Dorsolateral prefrontal cortex (tissue), 120 donors: ENCODE measurements at regions of chr14 and their contacts with region 1.

Region 1: DNA sequence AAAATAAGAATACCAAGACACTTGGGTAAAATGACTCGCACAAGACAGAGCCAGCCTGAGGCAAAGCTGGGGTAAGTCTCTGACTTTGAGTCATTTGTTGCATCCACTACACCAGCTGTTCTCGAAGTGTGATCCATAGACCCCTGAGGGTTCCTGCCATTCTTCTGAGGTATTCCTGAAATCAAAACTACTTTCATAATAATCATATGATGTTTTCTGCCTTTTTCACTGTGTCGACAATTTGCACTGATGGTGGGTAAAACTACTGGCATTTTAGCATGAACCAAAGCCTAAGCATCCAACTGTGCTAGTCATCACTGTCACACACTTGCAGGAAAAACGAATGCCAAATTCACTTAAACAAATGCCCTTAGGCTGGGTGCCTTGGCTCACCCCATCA is 135.5 kb upstream of the FUT8 start:
- DNase-seq: no peak
- H3K4me3 ChIP-seq: no peak overlapping the region
- H3K27ac ChIP-seq: peak overlapping the region; percentile 69 to 100 (median 96)
- H3K27me3 ChIP-seq: no peaks in the 10 kb centered on the region
- CTCF ChIP-seq: no peak

Region 2: DNA sequence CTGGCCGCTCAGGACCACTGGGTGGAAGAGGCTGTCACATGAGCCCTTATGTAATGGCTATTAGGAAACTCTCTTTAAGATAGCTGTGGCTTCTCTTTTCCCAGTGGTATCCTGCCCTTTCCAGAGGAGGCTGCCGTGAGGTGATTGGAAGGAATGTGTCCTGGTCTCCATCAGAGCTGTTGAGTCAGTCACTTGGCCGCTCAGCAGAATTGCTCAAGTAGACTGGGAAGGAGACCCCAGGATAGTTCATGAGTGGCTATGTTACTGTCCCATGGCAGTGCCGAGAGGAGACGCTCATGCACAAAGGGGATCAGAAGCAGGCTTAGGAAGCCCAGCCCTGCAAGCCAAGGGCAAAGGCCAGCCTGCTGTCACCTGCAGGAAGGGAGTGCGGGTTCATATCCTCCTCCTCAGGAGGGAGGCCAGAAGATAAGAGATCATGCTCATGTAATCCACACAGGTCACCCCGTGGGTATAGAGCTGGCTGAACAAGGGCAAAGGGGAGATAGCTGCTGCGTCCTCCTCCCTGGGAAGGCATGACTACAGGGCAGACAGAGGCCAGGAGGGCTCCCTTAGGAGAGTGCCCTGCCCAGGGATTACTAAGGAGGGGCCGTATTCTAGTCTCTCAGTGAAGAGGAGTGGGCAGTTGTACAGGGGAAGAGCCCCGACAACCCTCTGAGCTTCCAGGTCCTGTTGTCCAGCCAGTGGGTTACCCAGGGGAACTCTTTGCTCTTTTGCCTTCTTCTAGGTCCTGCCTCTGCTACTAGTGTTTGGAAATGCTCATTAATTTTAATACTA is 37.7 kb before region 1 on chr14:
- intact Hi-C with region 1: loop called (anchors 2 to 5 kb)
- DNase-seq: no peak
- H3K4me3 ChIP-seq: no peak overlapping the region
- H3K27ac ChIP-seq: peak overlapping the region; percentile 72 to 100 (median 94)
- H3K27me3 ChIP-seq: no peaks in the 10 kb centered on the region
- CTCF ChIP-seq: no peak